ENCODE measurements at regions of chr13 and their contacts with region 1.

Region 1: DNA sequence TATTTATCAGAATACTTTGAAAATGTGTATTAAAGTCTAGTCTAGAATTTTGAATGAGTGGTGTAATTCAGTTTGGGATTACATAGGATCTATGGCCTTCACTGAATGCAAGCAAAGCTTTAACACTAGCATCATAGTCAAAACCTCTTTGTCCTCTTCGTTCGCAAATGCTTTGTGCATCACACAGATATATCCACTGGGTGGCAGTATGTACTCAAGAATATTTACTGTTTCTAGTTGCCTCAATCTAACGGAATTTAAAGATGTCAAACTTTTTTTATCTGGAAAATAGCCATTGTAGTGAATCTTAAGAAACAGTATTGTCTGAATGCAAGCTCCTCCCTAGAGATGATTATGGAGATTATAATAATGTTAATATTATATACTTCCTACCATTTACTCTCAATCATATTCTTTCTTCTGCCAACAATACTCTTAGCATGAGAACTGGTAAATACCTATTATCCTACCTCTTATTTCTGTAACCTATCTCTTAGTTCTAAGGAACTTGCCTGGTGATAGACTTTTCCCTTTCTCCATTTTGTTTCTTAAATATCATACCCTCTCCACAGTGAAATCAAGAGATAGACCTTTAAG is 25.8 kb downstream of the LACC1 start:
- DNase-seq: peak in 1 of 2 donors; percentile 86
- H3K4me3 ChIP-seq: no peak overlapping the region
- H3K27ac ChIP-seq: no peak overlapping the region
- H3K4me1 ChIP-seq: peaks cover 0 to 16% (median 6%) of the 10 kb centered on the region in 4 donors
- H3K27me3 ChIP-seq: no peaks in the 10 kb centered on the region
- CTCF ChIP-seq: peak in 5 of 7 experiments; percentile 63 to 84 (median 76)
- EP300 ChIP-seq: no peak
- POLR2A ChIP-seq: no peak

Region 2: DNA sequence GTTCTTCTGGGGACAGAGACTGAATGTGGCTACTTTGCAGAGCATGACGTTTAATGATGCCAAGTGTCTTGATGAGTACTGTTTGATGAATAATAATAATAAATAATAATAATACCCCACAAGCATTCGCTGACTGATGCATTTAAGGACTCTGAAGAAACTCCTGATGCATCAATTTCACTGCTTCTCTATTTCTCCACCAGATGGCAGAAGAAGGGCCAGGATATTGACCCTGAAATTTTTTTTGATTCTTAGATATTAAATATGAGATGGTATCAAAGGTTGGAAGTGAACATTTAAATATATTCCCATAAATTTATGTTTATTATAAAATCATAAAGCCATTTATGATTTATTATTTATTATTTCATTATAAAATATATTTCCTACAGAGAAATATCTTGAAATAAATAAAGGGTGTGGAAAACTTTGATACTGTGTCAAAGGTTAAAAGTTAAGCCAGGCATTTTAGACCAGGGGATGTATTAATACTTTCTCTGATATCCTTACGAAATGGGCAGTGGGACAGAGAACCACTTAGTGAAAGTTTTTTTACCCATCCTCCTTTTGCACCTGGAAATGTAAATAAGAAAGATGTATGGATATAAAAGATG is 145.0 kb after region 1 on chr13:
- intact Hi-C with region 1: loop called (anchors 10 kb)
- DNase-seq: peak in 1 of 2 donors; percentile 71
- H3K4me3 ChIP-seq: no peak overlapping the region
- H3K27ac ChIP-seq: peak overlapping the region in 2 of 5 donors; percentile 2 to 37
- H3K4me1 ChIP-seq: peaks cover 4 to 38% (median 29%) of the 10 kb centered on the region in 4 donors
- H3K27me3 ChIP-seq: no peaks in the 10 kb centered on the region
- CTCF ChIP-seq: peak in 5 of 7 experiments; percentile 48 to 81 (median 75)
- EP300 ChIP-seq: no peak
- POLR2A ChIP-seq: no peak

Region 3: GRCh38 chr13:44197791-44198770 is 292.5 kb after region 1 on chr13:
- intact Hi-C with region 1: no loop called
- DNase-seq: peak in 1 of 2 donors; percentile 65
- H3K4me3 ChIP-seq: no peak overlapping the region
- H3K27ac ChIP-seq: peak overlapping the region in 3 of 5 donors; percentile 27 to 69 (median 40)
- H3K4me1 ChIP-seq: peaks cover 19 to 43% (median 26%) of the 10 kb centered on the region in 4 donors
- H3K27me3 ChIP-seq: no peaks in the 10 kb centered on the region
- CTCF ChIP-seq: no peak
- EP300 ChIP-seq: no peak
- POLR2A ChIP-seq: no peak

Region 4: DNA sequence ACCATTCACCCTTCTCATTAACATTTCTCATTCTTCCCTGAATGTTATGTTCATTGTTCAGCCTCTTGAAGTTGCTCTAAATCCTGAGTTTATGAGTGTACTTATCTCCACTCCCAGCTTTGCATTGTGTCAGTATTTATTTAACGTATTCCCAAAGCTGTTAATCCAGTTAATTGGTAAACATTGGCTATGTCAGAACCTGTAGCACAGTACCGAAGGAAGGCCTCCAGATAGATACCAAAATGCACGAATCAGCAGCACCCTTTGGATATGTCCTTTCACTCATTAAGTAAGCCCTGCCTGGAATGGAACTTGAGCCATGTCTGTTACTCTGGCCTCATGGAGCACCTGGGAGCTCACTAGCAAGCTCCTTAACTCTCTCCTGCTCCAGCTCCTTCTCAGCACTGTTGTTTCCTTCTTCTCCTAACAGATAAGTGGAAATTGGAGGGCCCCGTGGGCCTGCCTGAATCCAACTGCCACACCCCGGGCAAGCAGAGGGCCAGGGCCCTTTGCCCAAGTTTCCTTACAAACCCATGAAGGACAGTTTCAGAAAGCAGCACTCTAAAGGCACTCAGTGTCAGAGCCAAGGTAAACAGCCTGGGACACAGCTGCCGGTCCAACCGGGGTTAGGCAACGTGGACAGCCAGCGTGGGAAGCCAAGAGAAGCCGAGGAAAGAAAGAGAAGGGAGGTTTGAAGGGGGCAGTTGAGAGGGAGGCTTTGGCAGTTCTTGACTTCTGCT is 313.1 kb after region 1 on chr13:
- intact Hi-C with region 1: no loop called
- DNase-seq: peak; percentile 75 to 89
- H3K4me3 ChIP-seq: no peak overlapping the region
- H3K27ac ChIP-seq: peak overlapping the region; percentile 75 to 89 (median 85)
- H3K4me1 ChIP-seq: peaks cover 31 to 51% (median 41%) of the 10 kb centered on the region in 4 donors
- H3K27me3 ChIP-seq: no peaks in the 10 kb centered on the region
- CTCF ChIP-seq: no peak
- EP300 ChIP-seq: no peak
- POLR2A ChIP-seq: no peak